ENCODE measurements at regions of chr14 and their contacts with region 1.

Region 1: GRCh38 chr14:61479746-61480502 is 158.5 kb downstream of the PRKCH start:
- DNase-seq: no peak
- H3K4me3 ChIP-seq: no peak overlapping the region
- H3K27ac ChIP-seq: peak overlapping the region in 1 of 2 donors; percentile 61
- H3K4me1 ChIP-seq: peaks cover 0 to 4% of the 10 kb centered on the region in 2 donors
- H3K27me3 ChIP-seq: no peaks in the 10 kb centered on the region
- CTCF ChIP-seq: no peak
- POLR2A ChIP-seq: no peak

Region 2: GRCh38 chr14:61533511-61534510 is 53.9 kb after region 1 on chr14:
- intact Hi-C with region 1: loop called (anchors 2 kb)
- DNase-seq: no peak
- H3K4me3 ChIP-seq: no peak overlapping the region
- H3K27ac ChIP-seq: no peak overlapping the region
- H3K4me1 ChIP-seq: peaks cover 0 to 7% of the 10 kb centered on the region in 2 donors
- H3K27me3 ChIP-seq: no peaks in the 10 kb centered on the region
- CTCF ChIP-seq: no peak
- POLR2A ChIP-seq: no peak

Measured in breast epithelium (tissue), 4 donors.